HEK293 (cell line): ENCODE measurements at regions of chr18 and their contacts with region 1.

Region 1: GRCh38 chr18:46481048-46481846 is 175.8 kb downstream of the LOXHD1 start:
- H3K4me3 ChIP-seq: no peak overlapping the region
- H3K27ac ChIP-seq: no peak overlapping the region
- H3K4me1 ChIP-seq: no peaks in the 10 kb centered on the region; the same call in 1 of the 2 replicates
- CTCF ChIP-seq: no peak; the same call in 1 of the 2 replicates

Region 2: DNA sequence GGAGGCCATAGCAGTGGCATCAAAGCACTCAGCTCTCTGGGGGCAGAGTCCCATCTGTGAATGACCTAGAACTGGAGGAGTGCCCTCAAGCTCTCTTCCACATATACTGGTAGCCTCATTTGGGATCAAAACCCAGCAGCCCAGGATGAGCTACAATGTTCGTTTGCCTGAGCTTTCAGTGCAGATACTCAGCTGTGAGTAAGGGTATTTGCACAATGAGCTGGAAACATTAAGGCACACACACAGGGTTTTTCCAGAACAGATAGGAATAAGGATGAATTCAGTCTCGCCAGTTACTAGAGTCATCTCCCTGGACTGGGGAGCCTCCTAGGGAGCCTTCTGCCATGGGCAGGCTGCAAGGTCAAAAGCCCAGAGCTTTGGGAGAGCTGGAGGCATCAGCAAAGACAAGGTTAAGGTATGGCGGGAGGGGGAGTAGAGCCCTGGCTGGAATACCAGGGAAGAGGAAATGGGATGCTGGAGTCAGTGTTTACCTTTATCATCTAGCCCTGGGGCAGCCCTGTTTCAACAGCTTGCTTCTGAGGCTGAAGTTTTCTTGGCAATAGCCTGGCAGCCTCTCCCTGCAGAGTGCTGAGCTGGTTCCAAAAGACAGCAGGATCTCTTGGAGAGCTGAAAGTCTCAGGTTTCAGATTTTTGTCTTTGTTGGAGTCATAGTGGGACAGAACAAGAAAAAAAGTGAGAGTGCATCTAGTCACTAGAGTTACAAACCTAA is 11.9 kb before region 1 on chr18:
- CTCF ChIA-PET with region 1: interaction called, 16 read pairs
- POLR2A ChIA-PET with region 1: no interaction called
- H3K4me3 ChIP-seq: no peak overlapping the region
- H3K27ac ChIP-seq: no peak overlapping the region
- H3K4me1 ChIP-seq: peaks cover 5% of the 10 kb centered on the region; the same call in 1 of the 2 replicates
- CTCF ChIP-seq: no peak

Region 3: GRCh38 chr18:46497129-46497528 is 15.9 kb after region 1 on chr18:
- CTCF ChIA-PET with region 1: interaction called, 10 read pairs
- POLR2A ChIA-PET with region 1: no interaction called
- H3K4me3 ChIP-seq: no peak overlapping the region
- H3K27ac ChIP-seq: no peak overlapping the region
- H3K4me1 ChIP-seq: no peaks in the 10 kb centered on the region
- CTCF ChIP-seq: no peak